ENCODE measurements at regions of chr2 and their contacts with region 1.

Region 1: GRCh38 chr2:85390941-85391669 is 19.1 kb downstream of the CAPG start:
- DNase-seq: peak; percentile 80
- ATAC-seq: peak; percentile 25
- H3K4me3 ChIP-seq: no peak overlapping the region
- H3K4me3 Mint-ChIP-seq: peak overlapping the region; percentile 15
- H3K27ac ChIP-seq: peak overlapping the region; percentile 68 to 81
- H3K27ac Mint-ChIP-seq: peak overlapping the region; percentile 71
- H3K4me1 ChIP-seq: peaks cover 25 to 26% of the 10 kb centered on the region in 2 donors
- H3K4me1 Mint-ChIP-seq: peaks cover 31% of the 10 kb centered on the region
- H3K27me3 ChIP-seq: no peaks in the 10 kb centered on the region
- H3K27me3 Mint-ChIP-seq: no peaks in the 10 kb centered on the region
- CTCF ChIP-seq: peak; percentile 81

Region 2: GRCh38 chr2:84781942-84782716 is 609.0 kb before region 1 on chr2:
- CTCF ChIA-PET with region 1: no interaction called
- POLR2A ChIA-PET with region 1: no interaction called
- intact Hi-C with region 1: no loop called
- DNase-seq: peak; percentile 52
- ATAC-seq: peak; percentile 94
- H3K4me3 ChIP-seq: no peak overlapping the region
- H3K4me3 Mint-ChIP-seq: no peak overlapping the region
- H3K27ac ChIP-seq: peak overlapping the region; percentile 33 to 34
- H3K27ac Mint-ChIP-seq: peak overlapping the region; percentile 62
- H3K4me1 ChIP-seq: peaks cover 29 to 30% of the 10 kb centered on the region in 2 donors
- H3K4me1 Mint-ChIP-seq: peaks cover 34% of the 10 kb centered on the region
- H3K27me3 ChIP-seq: no peaks in the 10 kb centered on the region
- H3K27me3 Mint-ChIP-seq: no peaks in the 10 kb centered on the region
- CTCF ChIP-seq: no peak

Region 3: GRCh38 chr2:85354286-85355072 is 36.6 kb before region 1 on chr2 and contains the starts of genes ELMOD3 and RETSAT:
- CTCF ChIA-PET with region 1: no interaction called
- POLR2A ChIA-PET with region 1: no interaction called
- intact Hi-C with region 1: loop called (anchors 1 kb)
- DNase-seq: peak; percentile 98
- ATAC-seq: peak; percentile 99
- H3K4me3 ChIP-seq: peak within 1 kb of the TSS; percentile 60 to 100 (median 85)
- H3K4me3 Mint-ChIP-seq: peak within 1 kb of the TSS; percentile 95
- H3K27ac ChIP-seq: peak within 1 kb of the TSS; percentile 81 to 95
- H3K27ac Mint-ChIP-seq: peak within 1 kb of the TSS; percentile 95
- H3K4me1 ChIP-seq: peaks cover 19 to 26% of the 10 kb centered on the region in 2 donors
- H3K4me1 Mint-ChIP-seq: peaks cover 40% of the 10 kb centered on the region
- H3K27me3 ChIP-seq: no peaks in the 10 kb centered on the region
- H3K27me3 Mint-ChIP-seq: no peaks in the 10 kb centered on the region
- CTCF ChIP-seq: no peak
- total RNA-seq, gene ELMOD3: 34.0 and 34.3 TPM in 2 replicates
- total RNA-seq, gene RETSAT: 23.8 and 28.1 TPM in 2 replicates

Region 4: DNA sequence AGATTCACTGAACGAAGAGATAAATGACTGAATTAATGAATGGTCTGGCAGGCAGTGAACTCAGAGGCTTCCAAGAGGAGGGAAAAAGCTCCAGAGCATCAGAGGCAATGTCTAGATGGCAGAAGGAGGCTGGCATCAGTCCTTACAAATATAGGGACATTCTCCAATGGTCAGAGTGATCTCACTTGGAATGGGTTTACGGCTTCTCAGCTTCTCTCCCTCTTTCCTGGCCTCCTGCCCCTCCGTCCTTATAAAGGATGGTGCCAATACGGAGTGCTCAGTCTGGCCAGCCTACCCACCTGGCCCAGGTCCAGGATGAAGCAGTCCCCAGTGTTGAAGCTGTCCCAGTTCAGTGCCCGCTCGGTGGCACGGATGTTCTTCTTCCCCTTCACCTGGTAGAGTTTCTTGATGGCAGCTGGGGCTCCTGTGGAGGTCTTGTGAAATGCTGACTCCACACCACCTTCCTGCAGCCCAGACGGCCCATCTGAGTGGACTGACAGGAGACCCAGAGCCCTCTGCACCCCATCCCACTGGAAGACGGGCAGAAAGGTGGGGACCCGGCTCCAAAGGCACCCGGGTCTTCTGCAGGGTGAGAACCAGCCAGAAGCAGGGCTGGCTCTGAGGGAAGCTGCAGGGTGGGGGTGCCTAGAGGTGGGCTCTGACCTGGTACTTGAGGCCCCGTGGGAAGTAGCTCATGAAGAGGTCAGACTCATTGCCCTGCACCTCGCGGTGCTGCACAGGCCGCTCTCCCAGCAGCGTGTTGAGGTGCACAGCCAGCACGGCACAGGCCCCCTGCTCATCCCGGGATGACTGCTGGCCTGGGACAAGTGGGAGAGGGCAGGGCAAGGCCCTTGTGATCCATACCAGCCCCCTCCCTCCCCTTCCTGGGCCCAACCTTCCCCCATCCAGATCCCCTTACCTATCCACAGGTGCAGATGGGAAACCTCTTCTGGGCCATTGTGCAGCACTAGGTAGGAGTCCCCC is 10.1 kb after region 1 on chr2:
- CTCF ChIA-PET with region 1: interaction called, 45 read pairs
- POLR2A ChIA-PET with region 1: interaction called, 6 read pairs
- intact Hi-C with region 1: loop called (anchors 1 kb)
- DNase-seq: no peak
- ATAC-seq: no peak
- H3K4me3 ChIP-seq: no peak overlapping the region
- H3K4me3 Mint-ChIP-seq: no peak overlapping the region
- H3K27ac ChIP-seq: no peak overlapping the region
- H3K27ac Mint-ChIP-seq: peak overlapping the region; percentile 16
- H3K4me1 ChIP-seq: peaks cover 29 to 30% of the 10 kb centered on the region in 2 donors
- H3K4me1 Mint-ChIP-seq: peaks cover 29% of the 10 kb centered on the region
- H3K27me3 ChIP-seq: no peaks in the 10 kb centered on the region
- H3K27me3 Mint-ChIP-seq: no peaks in the 10 kb centered on the region
- CTCF ChIP-seq: no peak

Region 5: DNA sequence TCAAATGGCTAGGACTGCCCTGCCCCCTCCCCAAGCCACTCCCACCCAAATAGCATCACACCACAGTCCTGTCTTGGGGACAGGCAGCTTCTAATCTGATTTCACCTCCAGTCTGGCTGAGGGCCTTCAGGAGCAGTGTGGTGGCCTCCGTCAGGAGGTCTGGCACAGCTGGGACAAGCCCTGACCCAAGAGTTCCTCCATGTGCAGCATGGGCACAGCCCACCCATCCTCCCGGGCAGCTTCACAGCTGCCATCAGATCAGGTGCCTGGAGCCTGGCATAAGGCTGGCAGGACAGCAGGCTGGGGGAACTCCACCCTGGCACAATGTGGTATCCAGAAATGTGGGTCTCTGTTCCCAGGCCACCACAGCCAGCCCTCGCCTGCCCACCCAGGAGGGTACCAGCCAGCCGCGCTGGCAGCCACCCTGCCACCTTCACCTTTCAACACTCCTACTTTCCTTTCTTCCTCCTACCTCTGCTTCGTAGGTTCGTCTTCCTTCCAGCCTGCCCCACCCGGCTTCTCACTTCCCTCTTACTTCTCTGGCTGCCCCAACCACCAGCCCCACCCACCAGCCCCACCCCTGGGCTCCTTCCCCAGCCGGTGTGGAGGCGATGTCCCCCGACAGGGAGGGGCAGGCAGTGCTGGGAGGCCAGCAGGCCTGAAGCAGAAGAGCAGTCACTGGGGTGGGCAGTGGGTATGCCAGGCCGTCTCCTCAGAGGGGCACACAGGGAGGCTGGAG is 18.9 kb after region 1 on chr2 and contains the start of gene CAPG:
- CTCF ChIA-PET with region 1: interaction called, 45 read pairs
- POLR2A ChIA-PET with region 1: interaction called, 14 read pairs
- intact Hi-C with region 1: loop called (anchors 1 kb)
- DNase-seq: peak; percentile 82
- ATAC-seq: peak; percentile 78
- H3K4me3 ChIP-seq: peak within 1 kb of the TSS; percentile 43 to 75 (median 57)
- H3K4me3 Mint-ChIP-seq: peak within 1 kb of the TSS; percentile 90
- H3K27ac ChIP-seq: peak within 1 kb of the TSS; percentile 71 to 84
- H3K27ac Mint-ChIP-seq: peak within 1 kb of the TSS; percentile 91
- H3K4me1 ChIP-seq: peaks cover 73 to 84% of the 10 kb centered on the region in 2 donors
- H3K4me1 Mint-ChIP-seq: peaks cover 76% of the 10 kb centered on the region
- H3K27me3 ChIP-seq: no peaks in the 10 kb centered on the region
- H3K27me3 Mint-ChIP-seq: no peaks in the 10 kb centered on the region
- CTCF ChIP-seq: no peak
- total RNA-seq, gene CAPG: 179 and 210 TPM in 2 replicates

Region 6: GRCh38 chr2:85602476-85603234 is 211.6 kb after region 1 on chr2 and contains the start of gene TMEM150A:
- CTCF ChIA-PET with region 1: no interaction called
- POLR2A ChIA-PET with region 1: no interaction called
- intact Hi-C with region 1: loop called (anchors 5 kb)
- DNase-seq: peak; percentile 93
- ATAC-seq: peak; percentile 97
- H3K4me3 ChIP-seq: peak within 1 kb of the TSS; percentile 72 to 92 (median 86)
- H3K4me3 Mint-ChIP-seq: peak within 1 kb of the TSS; percentile 95
- H3K27ac ChIP-seq: peak within 1 kb of the TSS; percentile 20 to 74
- H3K27ac Mint-ChIP-seq: peak within 1 kb of the TSS; percentile 89
- H3K4me1 ChIP-seq: peaks cover 17 to 23% of the 10 kb centered on the region in 2 donors
- H3K4me1 Mint-ChIP-seq: peaks cover 30% of the 10 kb centered on the region
- H3K27me3 ChIP-seq: no peaks in the 10 kb centered on the region
- H3K27me3 Mint-ChIP-seq: no peaks in the 10 kb centered on the region
- CTCF ChIP-seq: no peak
- total RNA-seq, gene TMEM150A: 23.0 and 23.1 TPM in 2 replicates

Region 7: DNA sequence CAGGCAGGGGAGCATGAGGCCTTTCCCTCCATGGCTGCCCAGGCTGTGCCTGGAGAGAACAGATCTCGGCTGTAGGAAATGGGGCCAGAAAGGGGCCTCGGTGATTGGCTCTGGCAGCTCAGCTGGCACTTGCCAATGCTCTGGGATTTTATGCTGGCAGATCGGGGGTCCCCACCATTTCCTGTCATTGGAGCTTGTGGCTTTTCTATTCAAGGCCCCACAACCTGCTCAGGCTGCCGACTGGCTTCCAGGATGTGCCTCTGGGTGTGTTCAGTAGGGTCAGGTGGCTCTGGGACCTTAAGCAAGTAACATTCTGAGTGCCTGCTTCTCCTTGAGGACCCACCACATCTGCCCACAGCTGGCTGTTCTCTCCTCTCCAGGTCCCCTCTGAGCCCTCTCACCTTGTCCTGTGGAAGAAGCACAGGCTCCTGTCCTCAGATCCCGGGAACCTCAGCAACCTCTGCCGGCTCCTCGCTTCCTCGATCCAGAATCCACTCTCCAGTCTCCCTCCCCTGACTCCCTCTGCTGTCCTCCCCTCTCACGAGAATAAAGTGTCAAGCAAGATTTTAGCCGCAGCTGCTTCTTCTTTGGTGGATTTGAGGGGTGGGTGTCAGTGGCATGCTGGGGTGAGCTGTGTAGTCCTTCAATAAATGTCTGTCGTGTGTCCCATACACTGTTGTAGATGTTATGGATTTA is 307.2 kb after region 1 on chr2:
- CTCF ChIA-PET with region 1: no interaction called
- POLR2A ChIA-PET with region 1: no interaction called
- intact Hi-C with region 1: no loop called
- DNase-seq: no peak
- ATAC-seq: no peak
- H3K4me3 ChIP-seq: no peak overlapping the region
- H3K4me3 Mint-ChIP-seq: no peak overlapping the region
- H3K27ac ChIP-seq: no peak overlapping the region
- H3K27ac Mint-ChIP-seq: peak overlapping the region; percentile 15
- H3K4me1 ChIP-seq: peaks cover 0 to 3% of the 10 kb centered on the region in 2 donors
- H3K4me1 Mint-ChIP-seq: peaks cover 9% of the 10 kb centered on the region
- H3K27me3 ChIP-seq: no peaks in the 10 kb centered on the region
- H3K27me3 Mint-ChIP-seq: no peaks in the 10 kb centered on the region
- CTCF ChIP-seq: no peak